CD8-positive, alpha-beta T cell (primary cell): ENCODE measurements at regions of chr10 and their contacts with region 1.

Region 1: GRCh38 chr10:98134431-98135221 is at the start of gene R3HCC1L:
- DNase-seq: peak; percentile 87 to 96 (median 93)
- ATAC-seq: peak; percentile 95
- H3K4me3 ChIP-seq: peak within 1 kb of the TSS; percentile 85
- H3K4me3 Mint-ChIP-seq: peak within 1 kb of the TSS; percentile 92
- H3K27ac ChIP-seq: peak within 1 kb of the TSS; percentile 91 to 93
- H3K27ac Mint-ChIP-seq: peak within 1 kb of the TSS; percentile 97
- H3K4me1 ChIP-seq: peaks cover 23% of the 10 kb centered on the region
- H3K4me1 Mint-ChIP-seq: peaks cover 48% of the 10 kb centered on the region
- H3K27me3 ChIP-seq: no peaks in the 10 kb centered on the region
- H3K27me3 Mint-ChIP-seq: no peaks in the 10 kb centered on the region
- CTCF ChIP-seq: no peak
- total RNA-seq, gene R3HCC1L: 13.6 to 13.7 TPM

Region 2: GRCh38 chr10:97292097-97292862 is 842.3 kb before region 1 on chr10 and contains the start of gene ARHGAP19:
- CTCF ChIA-PET with region 1: no interaction called
- POLR2A ChIA-PET with region 1: no interaction called
- intact Hi-C with region 1: loop called in 1 of 2 experiments (anchors 10 kb)
- DNase-seq: peak; percentile 86 to 98 (median 91)
- ATAC-seq: peak; percentile 99
- H3K4me3 ChIP-seq: peak within 1 kb of the TSS; percentile 82 to 93
- H3K4me3 Mint-ChIP-seq: peak within 1 kb of the TSS; percentile 94
- H3K27ac ChIP-seq: peak within 1 kb of the TSS; percentile 73 to 75
- H3K27ac Mint-ChIP-seq: peak within 1 kb of the TSS; percentile 86
- H3K4me1 ChIP-seq: peaks cover 6% of the 10 kb centered on the region
- H3K4me1 Mint-ChIP-seq: peaks cover 20% of the 10 kb centered on the region
- H3K27me3 ChIP-seq: no peaks in the 10 kb centered on the region
- H3K27me3 Mint-ChIP-seq: no peaks in the 10 kb centered on the region
- CTCF ChIP-seq: no peak
- total RNA-seq, gene ARHGAP19: 5.7 to 6.4 TPM

Region 3: GRCh38 chr10:97632949-97633884 is 501.4 kb before region 1 on chr10 and contains the start of gene MORN4:
- CTCF ChIA-PET with region 1: no interaction called
- POLR2A ChIA-PET with region 1: no interaction called
- intact Hi-C with region 1: loop called in 1 of 2 experiments (anchors 5 kb)
- DNase-seq: peak; percentile 82 to 96 (median 91)
- ATAC-seq: peak; percentile 99
- H3K4me3 ChIP-seq: peak within 1 kb of the TSS; percentile 77 to 89
- H3K4me3 Mint-ChIP-seq: peak within 1 kb of the TSS; percentile 99
- H3K27ac ChIP-seq: peak within 1 kb of the TSS; percentile 18 to 39
- H3K27ac Mint-ChIP-seq: peak within 1 kb of the TSS; percentile 83
- H3K4me1 ChIP-seq: peaks cover 3% of the 10 kb centered on the region
- H3K4me1 Mint-ChIP-seq: peaks cover 13% of the 10 kb centered on the region
- H3K27me3 ChIP-seq: peaks cover 0 to 3% of the 10 kb centered on the region in 2 experiments
- H3K27me3 Mint-ChIP-seq: no peaks in the 10 kb centered on the region
- CTCF ChIP-seq: no peak
- total RNA-seq, gene MORN4: not detected

Region 4: GRCh38 chr10:97686962-97687784 is 447.5 kb before region 1 on chr10 and contains the start of gene AVPI1:
- CTCF ChIA-PET with region 1: no interaction called
- POLR2A ChIA-PET with region 1: interaction called, 3 read pairs
- intact Hi-C with region 1: loop called (anchors 5 kb)
- DNase-seq: peak; percentile 90 to 98 (median 96)
- ATAC-seq: peak; percentile 94
- H3K4me3 ChIP-seq: peak within 1 kb of the TSS; percentile 77 to 82
- H3K4me3 Mint-ChIP-seq: peak within 1 kb of the TSS; percentile 89
- H3K27ac ChIP-seq: peak within 1 kb of the TSS; percentile 47 to 64
- H3K27ac Mint-ChIP-seq: peak within 1 kb of the TSS; percentile 86
- H3K4me1 ChIP-seq: peaks cover 22% of the 10 kb centered on the region
- H3K4me1 Mint-ChIP-seq: peaks cover 23% of the 10 kb centered on the region
- H3K27me3 ChIP-seq: no peaks in the 10 kb centered on the region
- H3K27me3 Mint-ChIP-seq: peaks cover 4% of the 10 kb centered on the region
- CTCF ChIP-seq: no peak
- total RNA-seq, gene AVPI1: 13.7 TPM

Region 5: GRCh38 chr10:97869091-97870042 is 265.3 kb before region 1 on chr10:
- CTCF ChIA-PET with region 1: no interaction called
- POLR2A ChIA-PET with region 1: no interaction called
- intact Hi-C with region 1: no loop called
- DNase-seq: peak; percentile 65 to 93 (median 85)
- ATAC-seq: peak; percentile 99
- H3K4me3 ChIP-seq: peak overlapping the region; percentile 11 to 18
- H3K4me3 Mint-ChIP-seq: peak overlapping the region; percentile 43
- H3K27ac ChIP-seq: peak overlapping the region in 1 of 2 experiments; percentile 18
- H3K27ac Mint-ChIP-seq: peak overlapping the region; percentile 55
- H3K4me1 ChIP-seq: peaks cover 16% of the 10 kb centered on the region
- H3K4me1 Mint-ChIP-seq: peaks cover 12% of the 10 kb centered on the region
- H3K27me3 ChIP-seq: no peaks in the 10 kb centered on the region
- H3K27me3 Mint-ChIP-seq: peaks cover 8% of the 10 kb centered on the region
- CTCF ChIP-seq: peak; percentile 77

Region 6: DNA sequence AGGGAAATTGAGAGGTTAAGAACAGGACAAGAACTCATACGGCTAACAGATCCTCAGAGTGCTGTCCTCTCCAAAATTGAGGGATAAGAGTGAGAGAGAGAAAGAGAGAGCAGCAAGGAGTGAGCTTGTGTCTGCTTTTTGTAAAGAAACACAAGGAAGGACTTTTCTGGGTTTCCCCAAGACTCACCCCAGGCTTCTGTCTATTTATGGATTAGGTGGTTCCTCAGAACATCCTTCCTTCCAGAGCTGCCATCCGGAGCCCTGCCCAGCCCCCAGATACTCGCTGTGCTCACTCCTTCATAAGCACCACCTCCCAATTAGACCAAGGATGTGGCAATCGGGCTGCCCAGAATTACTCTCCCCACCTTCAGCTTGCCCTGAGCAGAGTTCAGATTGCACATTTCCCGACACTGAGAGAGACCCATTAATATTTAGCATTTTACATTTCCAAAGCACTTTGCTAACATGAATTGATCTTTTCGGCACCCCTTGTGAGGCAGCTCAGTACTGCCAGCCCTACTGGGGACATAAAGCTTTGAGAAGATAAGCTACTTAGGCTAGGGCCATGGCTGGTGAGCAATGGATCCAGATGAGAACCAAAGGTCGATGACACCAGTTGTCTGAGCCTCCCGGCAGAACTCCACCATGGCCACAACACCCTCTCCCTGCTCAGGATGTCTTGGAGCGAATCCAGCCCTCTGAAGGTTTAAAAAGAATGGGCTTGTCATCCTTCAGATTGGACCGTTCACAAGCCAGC is 19.4 kb before region 1 on chr10:
- CTCF ChIA-PET with region 1: no interaction called
- POLR2A ChIA-PET with region 1: no interaction called
- intact Hi-C with region 1: no loop called
- DNase-seq: no peak
- ATAC-seq: no peak
- H3K4me3 ChIP-seq: no peak overlapping the region
- H3K4me3 Mint-ChIP-seq: no peak overlapping the region
- H3K27ac ChIP-seq: no peak overlapping the region
- H3K27ac Mint-ChIP-seq: no peak overlapping the region
- H3K4me1 ChIP-seq: no peaks in the 10 kb centered on the region
- H3K4me1 Mint-ChIP-seq: no peaks in the 10 kb centered on the region
- H3K27me3 ChIP-seq: no peaks in the 10 kb centered on the region
- H3K27me3 Mint-ChIP-seq: peaks cover 39% of the 10 kb centered on the region
- CTCF ChIP-seq: no peak

Region 7: GRCh38 chr10:98144985-98145384 is 10.4 kb after region 1 on chr10:
- CTCF ChIA-PET with region 1: no interaction called
- POLR2A ChIA-PET with region 1: no interaction called
- intact Hi-C with region 1: no loop called
- DNase-seq: no peak
- ATAC-seq: no peak
- H3K4me3 ChIP-seq: no peak overlapping the region
- H3K4me3 Mint-ChIP-seq: no peak overlapping the region
- H3K27ac ChIP-seq: no peak overlapping the region
- H3K27ac Mint-ChIP-seq: no peak overlapping the region
- H3K4me1 ChIP-seq: peaks cover 3% of the 10 kb centered on the region
- H3K4me1 Mint-ChIP-seq: peaks cover 58% of the 10 kb centered on the region
- H3K27me3 ChIP-seq: no peaks in the 10 kb centered on the region
- H3K27me3 Mint-ChIP-seq: no peaks in the 10 kb centered on the region
- CTCF ChIP-seq: no peak

Region 8: DNA sequence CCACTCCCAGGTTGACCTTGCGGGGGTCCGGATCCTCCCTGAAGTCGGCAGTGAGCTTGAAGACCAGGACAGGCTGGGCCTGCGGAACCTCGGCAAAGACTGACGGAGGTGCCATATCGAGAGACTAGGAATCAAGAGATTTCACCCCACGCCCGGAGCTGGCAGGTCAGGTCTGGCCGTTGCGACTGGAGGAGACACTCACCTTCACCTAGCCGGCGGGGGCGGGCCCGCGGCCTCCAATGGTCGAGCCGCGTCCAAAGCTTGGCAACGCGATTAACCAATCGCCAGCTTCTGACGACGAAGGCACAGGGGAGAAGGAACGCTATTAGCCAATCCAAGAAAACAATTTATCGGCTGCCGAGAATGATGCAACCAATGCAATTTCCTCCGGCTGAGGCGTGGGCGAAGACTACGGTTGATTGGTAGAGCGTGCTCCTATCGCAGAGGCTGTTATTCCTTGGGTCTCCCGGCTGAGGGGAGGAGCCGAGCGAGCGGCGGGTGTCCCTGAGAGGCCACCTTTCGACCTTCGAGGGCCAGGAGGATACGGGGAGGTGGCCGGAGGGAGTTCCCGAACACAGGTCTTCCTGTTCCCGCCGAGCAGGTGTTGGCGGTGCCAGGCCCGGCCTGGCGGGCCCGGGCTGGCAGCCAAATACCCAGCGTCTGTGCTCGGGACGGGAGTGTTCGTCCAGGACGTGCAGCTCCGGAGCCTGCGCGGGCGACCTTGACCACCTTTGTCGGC is 1296.0 kb after region 1 on chr10 and contains the start of gene GOT1:
- CTCF ChIA-PET with region 1: no interaction called
- POLR2A ChIA-PET with region 1: interaction called, 3 read pairs
- intact Hi-C with region 1: loop called in 1 of 2 experiments (anchors 5 kb)
- DNase-seq: peak; percentile 83 to 98 (median 89)
- ATAC-seq: peak; percentile 92
- H3K4me3 ChIP-seq: peak within 1 kb of the TSS; percentile 81 to 96
- H3K4me3 Mint-ChIP-seq: peak within 1 kb of the TSS; percentile 98
- H3K27ac ChIP-seq: peak within 1 kb of the TSS; percentile 66 to 81
- H3K27ac Mint-ChIP-seq: peak within 1 kb of the TSS; percentile 96
- H3K4me1 ChIP-seq: peaks cover 21% of the 10 kb centered on the region
- H3K4me1 Mint-ChIP-seq: peaks cover 40% of the 10 kb centered on the region
- H3K27me3 ChIP-seq: no peaks in the 10 kb centered on the region
- H3K27me3 Mint-ChIP-seq: no peaks in the 10 kb centered on the region
- CTCF ChIP-seq: no peak
- total RNA-seq, gene GOT1: 7.2 to 8.6 TPM